ENCODE measurements at regions of chr9 and their contacts with region 1.

Region 1: DNA sequence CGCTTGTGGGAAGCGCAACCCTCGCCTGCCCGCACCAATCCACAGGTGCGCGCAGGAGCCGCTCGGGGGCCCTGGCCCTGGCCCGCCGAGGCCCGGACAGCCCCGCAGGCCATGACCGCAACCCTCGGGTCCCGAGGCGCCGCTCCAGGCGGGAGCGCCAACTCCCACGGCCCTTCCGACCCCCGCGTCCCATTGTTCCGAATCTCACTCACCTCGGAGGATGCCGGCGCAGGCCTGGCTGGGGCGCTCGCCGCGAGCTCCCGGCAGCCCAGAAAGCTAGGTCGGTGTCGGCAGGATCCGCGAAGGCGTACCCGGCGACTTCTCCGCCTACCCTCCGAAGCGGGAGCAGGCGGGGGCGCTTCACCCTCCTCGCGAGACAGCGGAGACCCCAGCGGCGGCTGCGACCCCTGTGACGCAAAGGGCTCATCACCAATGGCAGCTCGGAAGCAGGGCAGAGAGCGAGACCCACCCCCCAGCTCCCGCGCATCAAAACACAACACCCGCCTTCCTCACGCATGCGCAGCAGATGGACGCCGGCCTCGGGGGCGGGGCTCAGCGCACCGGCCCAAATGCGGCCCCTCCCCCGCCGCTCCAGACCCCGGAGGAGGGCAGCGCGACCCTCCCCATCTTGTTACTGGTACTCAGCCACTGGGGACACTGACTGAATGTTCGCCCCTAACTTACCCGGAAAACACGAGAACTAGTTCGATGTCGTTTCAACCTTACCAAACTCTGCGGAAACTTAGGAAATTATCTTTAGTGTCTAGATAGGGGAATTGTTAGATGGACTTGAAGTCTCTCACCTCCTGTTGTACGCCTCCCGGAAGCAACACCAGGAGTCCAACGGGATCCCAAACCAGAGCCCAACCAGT is 1.3 kb upstream of the SMIM27 start:
- DNase-seq: peak; percentile 96
- ATAC-seq: peak; percentile 83
- H3K4me3 Mint-ChIP-seq: peak overlapping the region; percentile 96
- H3K27ac Mint-ChIP-seq: peak overlapping the region; percentile 98
- H3K4me1 Mint-ChIP-seq: peaks cover 33% of the 10 kb centered on the region
- H3K27me3 Mint-ChIP-seq: no peaks in the 10 kb centered on the region

Region 2: GRCh38 chr9:32526041-32526706 is 24.6 kb before region 1 on chr9 and contains the start of gene RIGI:
- CTCF ChIA-PET with region 1: interaction called, 17 read pairs
- DNase-seq: peak; percentile 90
- ATAC-seq: peak; percentile 80
- H3K4me3 Mint-ChIP-seq: peak within 1 kb of the TSS; percentile 88
- H3K27ac Mint-ChIP-seq: peak within 1 kb of the TSS; percentile 96
- H3K4me1 Mint-ChIP-seq: peaks cover 55% of the 10 kb centered on the region
- H3K27me3 Mint-ChIP-seq: no peaks in the 10 kb centered on the region
- total RNA-seq, gene RIGI: 27.1 to 40.0 TPM

Region 3: DNA sequence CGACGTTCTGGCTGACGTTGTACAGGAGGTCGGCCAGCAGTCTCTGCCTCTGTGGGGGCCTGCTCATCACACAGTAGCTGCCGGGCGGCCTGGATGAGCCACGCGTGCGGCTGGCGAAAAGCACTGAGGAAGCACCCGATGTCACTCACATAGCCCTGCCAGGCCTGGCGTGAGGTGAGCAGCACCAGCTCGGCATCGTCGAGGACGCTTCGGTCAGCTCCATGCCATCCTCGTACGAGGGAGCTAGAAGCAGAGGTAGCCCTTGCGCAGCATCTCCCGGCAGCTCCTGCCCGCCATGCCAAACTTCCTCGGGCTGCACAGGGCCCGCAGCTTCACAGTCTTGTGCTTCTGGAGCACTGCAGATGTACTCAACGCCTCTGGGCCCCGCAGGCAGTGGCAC is 16.0 kb after region 1 on chr9:
- CTCF ChIA-PET with region 1: interaction called, 45 read pairs
- DNase-seq: no peak
- ATAC-seq: no peak
- H3K4me3 Mint-ChIP-seq: no peak overlapping the region
- H3K27ac Mint-ChIP-seq: no peak overlapping the region
- H3K4me1 Mint-ChIP-seq: peaks cover 30% of the 10 kb centered on the region
- H3K27me3 Mint-ChIP-seq: no peaks in the 10 kb centered on the region

Region 4: DNA sequence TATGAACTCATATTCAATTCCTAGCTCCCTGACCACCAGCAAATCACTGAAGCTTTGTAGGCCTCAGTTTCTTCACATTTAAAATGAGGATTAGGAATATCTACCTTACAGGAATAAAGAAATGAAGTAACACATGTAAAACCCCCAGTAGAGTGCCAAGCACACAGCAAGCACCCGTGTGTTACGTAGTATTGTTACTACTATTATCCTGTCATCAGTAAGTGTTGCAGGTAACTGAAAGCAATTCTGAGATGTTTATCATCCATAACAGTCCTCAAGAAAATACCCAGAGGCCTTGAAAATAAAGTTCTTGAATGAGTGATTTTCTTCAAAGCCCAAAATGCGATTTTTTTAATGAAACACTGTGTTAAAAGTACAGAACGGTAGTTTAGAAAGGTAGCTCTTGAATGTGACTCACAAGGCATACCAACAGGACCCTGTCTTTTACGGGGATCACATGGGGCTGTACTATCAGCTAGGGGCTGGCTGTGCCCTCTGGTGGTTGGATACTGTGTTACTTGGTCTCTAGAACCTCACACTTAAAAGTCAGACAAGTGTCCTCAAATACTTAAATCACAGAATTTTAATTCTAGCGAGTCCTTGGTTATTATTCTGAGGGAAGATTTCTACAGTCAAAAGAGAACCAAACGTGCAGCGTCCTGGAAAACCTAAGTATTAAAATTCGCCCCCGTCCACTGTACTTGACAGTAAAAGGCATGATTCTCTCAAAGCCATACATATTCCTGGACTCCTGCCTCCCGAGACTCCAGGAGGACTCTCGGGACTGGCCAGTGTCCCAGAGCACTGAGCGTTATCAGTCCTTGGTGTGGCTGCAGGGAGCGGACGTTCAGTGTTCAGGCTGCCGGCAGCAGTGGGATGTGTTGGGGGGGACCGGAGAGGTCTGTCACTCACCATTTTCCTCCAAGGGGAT is 21.4 kb after region 1 on chr9:
- CTCF ChIA-PET with region 1: interaction called, 45 read pairs
- DNase-seq: peak; percentile 89
- ATAC-seq: peak; percentile 85
- H3K4me3 Mint-ChIP-seq: peak overlapping the region; percentile 97
- H3K27ac Mint-ChIP-seq: peak overlapping the region; percentile 98
- H3K4me1 Mint-ChIP-seq: peaks cover 27% of the 10 kb centered on the region
- H3K27me3 Mint-ChIP-seq: no peaks in the 10 kb centered on the region

Region 5: DNA sequence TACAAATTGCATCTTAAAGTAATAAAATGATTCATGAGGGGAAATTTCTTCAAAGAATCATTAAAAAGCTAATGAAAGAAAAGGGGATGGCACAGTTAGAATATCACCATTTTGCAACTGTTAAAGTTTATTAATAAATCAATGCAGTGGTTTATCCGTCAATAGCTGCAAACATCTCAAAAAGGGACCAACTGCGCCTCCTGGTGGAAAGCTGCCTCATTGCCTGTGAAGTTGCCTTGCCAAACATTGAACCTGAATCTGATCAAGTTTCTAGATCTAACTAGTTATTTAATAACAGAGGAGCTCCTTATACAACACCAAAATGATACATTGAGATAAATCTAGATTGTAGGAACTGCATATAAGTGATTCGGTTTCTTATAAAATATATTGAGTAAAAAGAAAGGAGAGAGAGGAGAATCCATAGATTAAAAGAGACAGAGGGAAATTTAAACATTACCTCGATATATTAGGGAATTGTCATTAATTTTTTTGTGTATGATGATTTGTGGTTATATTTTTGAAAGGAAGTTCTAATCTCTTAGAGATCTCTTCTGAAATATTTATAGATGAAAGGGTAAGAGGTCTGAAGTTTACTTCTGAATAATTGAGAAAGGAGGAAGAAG is 29.0 kb after region 1 on chr9:
- CTCF ChIA-PET with region 1: interaction called, 45 read pairs
- DNase-seq: peak; percentile 84
- ATAC-seq: peak; percentile 81
- H3K4me3 Mint-ChIP-seq: no peak overlapping the region
- H3K27ac Mint-ChIP-seq: no peak overlapping the region
- H3K4me1 Mint-ChIP-seq: peaks cover 17% of the 10 kb centered on the region
- H3K27me3 Mint-ChIP-seq: peaks cover 18% of the 10 kb centered on the region

Region 6: DNA sequence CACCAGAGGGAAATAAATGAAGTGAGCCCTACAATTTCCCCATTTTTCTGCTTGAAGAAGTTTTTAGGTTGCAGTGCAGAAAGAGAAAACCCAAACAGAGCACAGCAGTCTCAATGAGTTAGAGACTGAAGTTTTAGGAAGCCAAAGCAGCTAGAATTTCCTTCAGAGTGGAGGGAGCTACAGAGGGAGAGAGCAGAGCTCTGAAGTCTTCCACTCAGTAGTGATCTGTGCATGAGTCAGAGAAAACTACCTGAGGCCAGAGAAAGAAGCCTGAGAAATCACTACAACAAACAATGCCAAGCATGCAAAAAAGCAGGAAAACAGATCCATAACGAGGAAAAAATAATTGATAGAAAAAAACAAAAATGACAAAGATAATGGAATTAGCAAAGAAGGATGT is 40.1 kb after region 1 on chr9:
- CTCF ChIA-PET with region 1: no interaction called
- DNase-seq: no peak
- ATAC-seq: no peak
- H3K4me3 Mint-ChIP-seq: no peak overlapping the region
- H3K27ac Mint-ChIP-seq: no peak overlapping the region
- H3K4me1 Mint-ChIP-seq: peaks cover 3% of the 10 kb centered on the region
- H3K27me3 Mint-ChIP-seq: peaks cover 29% of the 10 kb centered on the region